ENCODE measurements at regions of chr5 and their contacts with region 1.

Region 1: GRCh38 chr5:61162010-61162831 is at the start of gene SMIM15:
- DNase-seq: peak; percentile 93
- ATAC-seq: peak; percentile 98 to 99
- total RNA-seq, gene SMIM15: 26.0 to 32.2 TPM

Region 2: DNA sequence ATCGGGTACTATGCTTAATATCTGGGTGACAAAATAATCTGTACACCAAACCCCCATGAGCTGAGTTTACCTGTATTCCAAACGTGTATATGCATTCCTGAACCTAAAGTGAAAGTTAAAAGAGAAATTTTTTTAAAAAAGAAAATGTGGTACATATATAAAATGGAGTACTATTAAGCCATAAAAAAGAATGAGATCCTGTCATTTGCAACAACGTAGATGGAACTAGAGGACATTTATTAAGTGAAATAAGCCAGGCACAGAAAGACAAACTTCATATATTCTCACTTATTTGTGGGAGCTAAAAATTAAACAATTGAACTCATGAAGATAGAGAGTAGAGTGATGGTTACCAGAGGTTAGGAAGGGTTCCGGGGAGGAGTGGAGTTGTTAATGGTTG is 172.4 kb before region 1 on chr5:
- intact Hi-C with region 1: no loop called
- DNase-seq: no peak
- ATAC-seq: no peak

Region 3: GRCh38 chr5:61625681-61626621 is 463.7 kb after region 1 on chr5:
- intact Hi-C with region 1: loop called in 1 of 2 experiments (anchors 10 kb)
- DNase-seq: peak; percentile 84
- ATAC-seq: peak; percentile 96 to 97

Region 4: DNA sequence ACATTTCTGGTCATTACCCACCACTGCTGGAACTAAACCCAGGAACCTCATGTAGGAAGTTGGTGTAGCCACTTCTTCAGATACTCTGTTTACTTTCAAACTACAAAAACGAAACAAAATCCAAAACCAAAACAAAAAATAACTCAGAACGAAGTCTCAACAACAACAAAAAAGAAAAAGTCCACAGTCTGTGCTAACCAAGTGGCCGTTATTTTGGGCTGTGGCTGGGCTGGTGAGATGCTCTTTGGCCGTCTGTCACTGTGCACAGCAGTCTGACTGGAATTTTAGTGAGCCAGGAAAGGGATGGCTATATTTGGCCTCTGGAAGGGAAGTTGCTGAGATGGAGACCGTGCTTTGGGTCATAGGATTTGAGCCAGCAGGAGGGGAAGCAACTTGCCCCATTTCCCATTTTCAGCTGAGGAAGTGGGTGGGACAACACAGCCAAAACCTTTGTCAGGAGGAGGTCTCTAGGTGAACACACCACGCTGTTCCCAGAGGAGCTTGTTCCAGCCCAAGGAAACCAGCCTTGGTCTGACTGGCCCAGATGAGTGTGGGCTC is 503.9 kb after region 1 on chr5:
- intact Hi-C with region 1: loop called in 1 of 2 experiments (anchors 10 kb)
- DNase-seq: no peak
- ATAC-seq: peak; percentile 42 to 49

Measured in left cardiac atrium (tissue), 4 donors.